ENCODE measurements at regions of chr12 and their contacts with region 1.

Region 1: DNA sequence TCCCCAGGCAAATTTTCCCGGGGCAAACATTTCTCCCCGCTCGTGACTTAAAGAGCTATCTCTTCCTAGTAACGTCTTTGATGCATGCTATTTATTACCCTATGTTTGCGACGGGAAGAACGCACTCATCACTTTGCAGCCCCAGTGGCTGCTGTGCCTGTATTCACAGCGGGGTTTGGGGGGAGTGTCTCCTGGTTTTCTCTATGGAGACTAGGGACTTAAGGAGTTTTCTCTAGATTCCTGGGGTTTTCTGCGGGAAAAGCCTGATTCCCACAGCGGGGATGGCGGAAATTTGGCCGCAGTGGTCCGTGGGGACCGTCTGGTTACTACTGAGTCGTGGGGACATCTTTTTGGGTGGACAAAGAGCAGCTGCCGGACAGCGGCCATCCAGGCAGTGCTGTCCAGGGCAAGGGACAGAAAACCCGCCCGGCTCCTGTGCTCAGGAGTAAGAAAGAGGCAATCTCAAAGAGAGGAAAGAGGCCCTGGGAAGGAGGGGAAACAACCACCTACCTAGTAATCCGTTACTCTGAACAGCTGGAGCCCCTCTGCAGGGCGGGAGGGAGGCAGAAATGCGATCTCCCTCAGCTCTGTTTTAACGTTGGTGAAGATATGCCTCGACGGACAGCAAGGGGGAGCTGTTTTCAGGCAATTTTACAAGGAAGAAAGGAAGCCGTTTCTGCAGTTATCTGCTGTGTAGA is 771 bp upstream of the AVPR1A start:
- DNase-seq: no peak
- H3K4me3 ChIP-seq: no peak overlapping the region
- CTCF ChIP-seq: peak; percentile 79

Region 2: DNA sequence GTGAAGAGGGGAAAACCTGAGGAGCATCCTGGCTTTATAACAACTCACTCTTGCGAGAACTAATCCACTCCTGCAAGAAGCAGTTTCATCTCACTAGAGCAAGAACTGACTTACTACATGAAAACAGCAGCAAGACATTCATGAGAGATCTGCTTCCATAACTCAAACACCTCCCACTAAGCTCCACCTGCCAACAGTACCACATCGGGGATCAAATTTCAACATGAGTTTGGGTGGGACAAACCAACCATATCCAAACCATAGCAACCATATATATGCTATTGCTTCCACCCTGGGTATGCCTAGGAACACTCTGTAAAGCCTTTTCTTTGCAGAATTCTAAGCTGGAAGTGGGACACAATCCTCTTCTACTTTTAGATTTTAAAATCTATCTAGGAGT is 13.1 kb after region 1 on chr12:
- CTCF ChIA-PET with region 1: interaction called, 12 read pairs
- POLR2A ChIA-PET with region 1: no interaction called
- DNase-seq: no peak
- H3K4me3 ChIP-seq: no peak overlapping the region
- CTCF ChIP-seq: no peak

Region 3: GRCh38 chr12:63170321-63170720 is 18.5 kb after region 1 on chr12:
- CTCF ChIA-PET with region 1: interaction called, 12 read pairs
- POLR2A ChIA-PET with region 1: no interaction called
- DNase-seq: no peak
- H3K4me3 ChIP-seq: no peak overlapping the region
- CTCF ChIP-seq: no peak

Region 4: DNA sequence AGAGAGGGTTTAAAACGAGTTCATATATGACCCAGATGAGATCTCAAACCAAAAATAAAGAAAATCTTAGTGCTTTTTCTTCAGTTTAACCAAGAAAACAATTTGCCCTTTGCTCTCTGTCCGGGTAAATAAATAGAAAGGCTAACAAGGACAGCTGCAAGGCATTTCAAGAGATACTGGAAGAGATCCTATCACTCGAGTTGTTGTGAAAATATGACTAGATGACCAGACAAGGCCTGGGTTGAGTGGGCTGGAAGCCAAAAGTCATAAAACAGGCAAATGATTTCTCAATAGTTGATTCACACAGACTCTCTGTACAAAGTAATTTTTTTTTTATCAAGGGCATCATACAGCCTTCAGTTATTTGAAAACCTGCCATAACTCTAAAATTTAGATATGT is 55.1 kb after region 1 on chr12:
- CTCF ChIA-PET with region 1: no interaction called
- POLR2A ChIA-PET with region 1: no interaction called
- DNase-seq: no peak
- H3K4me3 ChIP-seq: no peak overlapping the region
- CTCF ChIP-seq: no peak